A549 (cell line): ENCODE measurements at regions of chr19 and their contacts with region 1.

Region 1: DNA sequence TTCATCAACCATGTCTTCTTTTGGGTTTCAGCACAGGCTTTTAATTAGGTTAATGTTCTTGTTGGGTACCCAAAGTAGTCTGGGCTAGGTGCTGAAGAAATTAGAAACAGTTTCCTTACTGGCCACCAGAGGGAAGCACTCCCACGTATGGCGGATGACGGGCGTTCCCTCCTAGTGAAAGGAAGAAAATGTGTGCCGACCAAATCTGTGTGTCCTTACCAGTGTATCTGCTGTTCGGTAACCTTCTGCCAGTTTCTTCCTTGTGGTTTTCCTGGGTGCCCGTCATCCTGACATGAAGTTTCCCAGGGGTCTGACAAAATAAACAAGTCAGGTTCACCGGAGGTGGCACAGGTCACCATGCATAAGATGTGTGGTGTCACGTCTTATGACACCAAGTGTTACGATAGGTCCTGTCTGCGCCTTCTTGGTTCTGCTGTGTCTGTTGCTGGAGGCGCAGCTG is 6.0 kb upstream of the WDR88 start:
- DNase-seq: peak; percentile 85 to 97
- ATAC-seq: peak; percentile 95 to 96
- H3K4me3 ChIP-seq: no peak overlapping the region
- H3K27ac ChIP-seq: 0 out of 6 replicates have a peak overlapping the region, but pooled peaks of 1 of the 2 experiments have one; percentile 17
- H3K4me1 ChIP-seq: no peaks in the 10 kb centered on the region
- CTCF ChIP-seq: peak; percentile 98
- EP300 ChIP-seq: no peak
- POLR2A ChIP-seq: no peak
- RAD21 ChIP-seq: peak; percentile 85 to 86

Region 2: GRCh38 chr19:33040994-33041827 is 84.7 kb before region 1 on chr19:
- CTCF ChIA-PET with region 1: interaction called, 11 read pairs
- POLR2A ChIA-PET with region 1: no interaction called
- DNase-seq: peak; percentile 100
- ATAC-seq: peak; percentile 95 to 96
- H3K4me3 ChIP-seq: peak overlapping the region; percentile 14; the same call in 2 of the 3 replicates
- H3K27ac ChIP-seq: peak overlapping the region; percentile 87 to 92
- H3K4me1 ChIP-seq: peaks cover 53% of the 10 kb centered on the region
- CTCF ChIP-seq: no peak
- EP300 ChIP-seq: peak; percentile 93 to 97
- POLR2A ChIP-seq: no peak
- RAD21 ChIP-seq: peak; percentile 37 to 76

Region 3: DNA sequence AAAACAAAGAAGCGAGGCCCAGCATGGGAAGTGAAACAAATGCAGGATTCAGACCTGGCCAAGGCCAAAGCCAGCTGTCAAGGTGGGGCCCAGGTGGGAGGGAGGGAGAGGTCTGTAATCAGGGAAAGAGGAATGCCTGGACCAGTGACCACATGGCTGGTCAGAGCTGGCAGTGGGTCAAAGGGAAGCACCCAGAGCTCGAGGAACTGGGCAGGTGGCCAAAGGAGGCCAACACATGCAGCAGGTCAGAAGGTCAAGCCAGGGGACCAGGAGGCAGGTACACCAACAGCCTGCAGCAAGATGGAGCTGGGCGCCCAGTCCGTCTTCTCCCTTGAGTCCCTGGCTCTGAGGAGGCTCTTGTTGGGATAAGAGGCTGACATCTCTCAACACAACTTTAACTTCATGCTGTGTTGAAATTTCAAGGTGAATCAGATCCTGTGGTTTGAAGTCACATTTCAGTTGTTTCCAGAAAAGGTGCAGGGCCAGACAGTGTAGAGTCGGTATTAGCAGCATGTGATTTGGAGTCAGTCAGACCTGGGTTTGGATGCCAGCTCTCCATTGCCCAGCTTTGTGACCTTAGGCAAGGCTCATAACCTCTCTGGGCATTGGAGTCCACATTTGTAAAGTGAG is 27.8 kb before region 1 on chr19:
- CTCF ChIA-PET with region 1: interaction called, 37 read pairs
- POLR2A ChIA-PET with region 1: no interaction called
- DNase-seq: peak in 1 of 2 experiments; percentile 40
- ATAC-seq: peak; percentile 9 to 27; a peak in 3 of 6 replicates
- H3K4me3 ChIP-seq: no peak overlapping the region
- H3K27ac ChIP-seq: peak overlapping the region in 1 of 2 experiments; percentile 35; a peak in 3 of 6 replicates
- H3K4me1 ChIP-seq: peaks cover 36% of the 10 kb centered on the region
- CTCF ChIP-seq: no peak
- EP300 ChIP-seq: no peak
- POLR2A ChIP-seq: no peak
- RAD21 ChIP-seq: no peak

Region 4: GRCh38 chr19:33143897-33144405 is 18.0 kb after region 1 on chr19:
- CTCF ChIA-PET with region 1: interaction called, 87 read pairs
- POLR2A ChIA-PET with region 1: interaction called, 5 read pairs
- DNase-seq: peak; percentile 83 to 98
- ATAC-seq: peak; percentile 91 to 97
- H3K4me3 ChIP-seq: no peak overlapping the region
- H3K27ac ChIP-seq: peak overlapping the region; percentile 14 to 62; a peak in 4 of 6 replicates
- H3K4me1 ChIP-seq: no peaks in the 10 kb centered on the region
- CTCF ChIP-seq: peak; percentile 99
- EP300 ChIP-seq: no peak
- POLR2A ChIP-seq: no peak
- RAD21 ChIP-seq: peak; percentile 97

Region 5: GRCh38 chr19:33176670-33177416 is 50.9 kb after region 1 on chr19:
- CTCF ChIA-PET with region 1: interaction called, 62 read pairs
- POLR2A ChIA-PET with region 1: interaction called, 8 read pairs
- DNase-seq: peak; percentile 100
- ATAC-seq: peak; percentile 84 to 94
- H3K4me3 ChIP-seq: peak overlapping the region; percentile 65
- H3K27ac ChIP-seq: peak overlapping the region; percentile 89 to 91
- H3K4me1 ChIP-seq: peaks cover 19% of the 10 kb centered on the region
- CTCF ChIP-seq: no peak
- EP300 ChIP-seq: no peak
- POLR2A ChIP-seq: peak; percentile 100
- RAD21 ChIP-seq: 0 out of 5 replicates have a peak, but pooled peaks of 1 of the 2 experiments have one; percentile 16

Region 6: GRCh38 chr19:33245948-33246708 is 120.2 kb after region 1 on chr19:
- CTCF ChIA-PET with region 1: no interaction called
- POLR2A ChIA-PET with region 1: no interaction called
- DNase-seq: no peak
- ATAC-seq: no peak
- H3K4me3 ChIP-seq: no peak overlapping the region
- H3K27ac ChIP-seq: no peak overlapping the region
- H3K4me1 ChIP-seq: peaks cover 16% of the 10 kb centered on the region
- CTCF ChIP-seq: peak; percentile 44; the same call in 2 of the 3 replicates
- EP300 ChIP-seq: no peak
- POLR2A ChIP-seq: no peak
- RAD21 ChIP-seq: 0 out of 5 replicates have a peak, but pooled peaks of 1 of the 2 experiments have one; percentile 19